Heart left ventricle (tissue), 16 donors: ENCODE measurements at regions of chr3 and their contacts with region 1.

Region 1: GRCh38 chr3:47513125-47513929 is at the start of gene ELP6:
- DNase-seq: peak; percentile 98
- ATAC-seq: peak; percentile 99
- H3K4me3 ChIP-seq: peak within 1 kb of the TSS; percentile 37 to 99 (median 71)
- H3K27ac ChIP-seq: peak within 1 kb of the TSS; percentile 86 to 100 (median 96)
- H3K4me1 ChIP-seq: peaks cover 0 to 16% (median 8%) of the 10 kb centered on the region in 12 donors
- H3K27me3 ChIP-seq: no peaks in the 10 kb centered on the region
- CTCF ChIP-seq: peak in 10 of 12 donors; percentile 32 to 66 (median 46)
- POLR2A ChIP-seq: peak in 1 of 2 donors; percentile 77
- total RNA-seq, gene ELP6: 14.9 to 22.1 (median 19.7) TPM

Region 2: DNA sequence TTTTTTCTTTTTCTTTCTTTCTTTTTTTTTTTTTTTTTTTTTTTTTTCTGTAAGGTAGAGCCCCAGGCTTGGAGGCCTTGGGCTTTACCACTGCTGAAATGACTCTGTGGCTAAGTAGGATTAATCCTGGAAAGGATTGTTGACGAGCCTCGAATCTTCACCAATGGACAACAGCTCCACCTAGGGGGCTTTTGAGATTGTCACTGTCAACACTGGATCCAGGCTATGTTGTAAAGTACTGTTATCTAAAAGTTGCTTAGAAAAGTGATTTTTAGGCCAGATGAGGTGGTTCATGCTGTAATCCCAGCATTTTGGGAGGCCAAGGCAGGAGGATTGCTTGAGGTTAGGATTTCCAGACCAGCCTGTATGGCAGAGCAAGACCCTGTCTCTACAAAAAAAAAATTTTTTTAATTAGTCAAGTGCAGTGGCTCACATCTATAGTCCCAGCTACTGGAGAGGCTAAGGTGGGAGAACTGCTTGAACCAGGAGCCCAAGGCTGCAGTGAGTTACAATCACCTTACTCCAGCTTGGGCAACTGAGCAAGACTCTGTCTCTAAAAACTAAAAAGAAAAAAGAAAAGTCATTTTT is 189.0 kb before region 1 on chr3:
- intact Hi-C with region 1: no loop called
- DNase-seq: peak in 4 of 5 donors; percentile 37 to 63 (median 50)
- ATAC-seq: peak; percentile 49 to 94 (median 88)
- H3K4me3 ChIP-seq: no peak overlapping the region
- H3K27ac ChIP-seq: no peak overlapping the region
- H3K4me1 ChIP-seq: peaks cover 0 to 8% (median 0%) of the 10 kb centered on the region in 12 donors
- H3K27me3 ChIP-seq: no peaks in the 10 kb centered on the region
- CTCF ChIP-seq: peak; percentile 60 to 80 (median 68)
- POLR2A ChIP-seq: no peak

Region 3: GRCh38 chr3:47420511-47421484 is 92.5 kb before region 1 on chr3:
- intact Hi-C with region 1: loop called in 1 of 10 experiments (anchors 1 kb)
- DNase-seq: peak; percentile 82 to 87 (median 83)
- ATAC-seq: peak; percentile 63 to 83 (median 73)
- H3K4me3 ChIP-seq: peak overlapping the region in 3 of 12 donors; percentile 15 to 19 (median 18)
- H3K27ac ChIP-seq: peak overlapping the region in 11 of 12 donors; percentile 60 to 84 (median 73)
- H3K4me1 ChIP-seq: peaks cover 0 to 26% (median 16%) of the 10 kb centered on the region in 12 donors
- H3K27me3 ChIP-seq: no peaks in the 10 kb centered on the region
- CTCF ChIP-seq: peak; percentile 83 to 93 (median 90)
- POLR2A ChIP-seq: peak in 1 of 2 donors; percentile 18

Region 4: DNA sequence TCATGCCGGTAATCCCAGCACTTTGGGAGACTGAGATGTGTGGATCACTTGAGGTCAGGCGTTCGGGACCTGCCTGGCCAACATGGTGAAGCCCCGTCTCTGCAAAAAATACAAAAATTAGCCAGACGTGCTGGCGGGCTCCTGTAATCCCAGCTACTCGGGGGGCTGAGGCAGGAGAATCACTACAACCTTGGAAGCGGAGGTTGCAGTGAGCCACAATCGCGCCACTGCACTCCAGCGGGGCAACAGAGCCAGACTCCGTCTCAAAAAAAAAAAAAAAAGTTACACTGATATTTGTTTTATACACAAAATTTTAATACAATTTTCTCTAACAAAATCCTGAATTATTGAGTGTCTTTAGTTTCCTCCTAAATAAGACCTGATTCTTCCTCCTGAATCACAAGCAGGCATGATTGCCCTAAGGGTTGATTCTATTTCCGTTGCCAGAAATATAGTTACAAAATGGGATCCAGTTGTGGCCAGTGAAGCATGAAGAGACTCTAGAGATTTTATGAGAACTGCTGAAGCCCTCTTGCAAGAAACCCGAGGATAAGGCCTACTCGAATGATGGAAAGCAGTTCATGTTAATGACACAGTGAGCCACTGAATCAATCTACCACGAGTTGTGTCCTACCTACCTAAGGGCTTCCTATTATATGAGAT is 278.0 kb after region 1 on chr3:
- intact Hi-C with region 1: loop called in 1 of 10 experiments (anchors 2 kb)
- DNase-seq: no peak
- ATAC-seq: no peak
- H3K4me3 ChIP-seq: no peak overlapping the region
- H3K27ac ChIP-seq: no peak overlapping the region
- H3K4me1 ChIP-seq: peaks cover 0 to 5% (median 0%) of the 10 kb centered on the region in 12 donors
- H3K27me3 ChIP-seq: no peaks in the 10 kb centered on the region
- CTCF ChIP-seq: no peak
- POLR2A ChIP-seq: no peak

Region 5: GRCh38 chr3:47802734-47803477 is 289.6 kb after region 1 on chr3 and contains the start of gene DHX30:
- intact Hi-C with region 1: loop called in 1 of 10 experiments (anchors 5 kb)
- DNase-seq: peak; percentile 91 to 95 (median 92)
- ATAC-seq: peak; percentile 79 to 96 (median 91)
- H3K4me3 ChIP-seq: peak within 1 kb of the TSS; percentile 69 to 99 (median 90)
- H3K27ac ChIP-seq: peak within 1 kb of the TSS; percentile 94 to 99 (median 98)
- H3K4me1 ChIP-seq: peaks cover 0 to 26% (median 16%) of the 10 kb centered on the region in 12 donors
- H3K27me3 ChIP-seq: no peaks in the 10 kb centered on the region
- CTCF ChIP-seq: no peak
- POLR2A ChIP-seq: peak in 1 of 2 donors; percentile 90
- total RNA-seq, gene DHX30: 41.2 to 74.4 (median 49.4) TPM